PC-9 (cell line): ENCODE measurements at regions of chr14 and their contacts with region 1.

Region 1: GRCh38 chr14:75648066-75648838 is 12.4 kb downstream of the ERG28 start:
- DNase-seq: peak; percentile 76 to 94
- H3K4me3 ChIP-seq: no peak overlapping the region
- H3K27ac ChIP-seq: peak overlapping the region; percentile 61
- H3K4me1 ChIP-seq: peaks cover 45% of the 10 kb centered on the region
- H3K27me3 ChIP-seq: no peaks in the 10 kb centered on the region
- CTCF ChIP-seq: no peak

Region 2: DNA sequence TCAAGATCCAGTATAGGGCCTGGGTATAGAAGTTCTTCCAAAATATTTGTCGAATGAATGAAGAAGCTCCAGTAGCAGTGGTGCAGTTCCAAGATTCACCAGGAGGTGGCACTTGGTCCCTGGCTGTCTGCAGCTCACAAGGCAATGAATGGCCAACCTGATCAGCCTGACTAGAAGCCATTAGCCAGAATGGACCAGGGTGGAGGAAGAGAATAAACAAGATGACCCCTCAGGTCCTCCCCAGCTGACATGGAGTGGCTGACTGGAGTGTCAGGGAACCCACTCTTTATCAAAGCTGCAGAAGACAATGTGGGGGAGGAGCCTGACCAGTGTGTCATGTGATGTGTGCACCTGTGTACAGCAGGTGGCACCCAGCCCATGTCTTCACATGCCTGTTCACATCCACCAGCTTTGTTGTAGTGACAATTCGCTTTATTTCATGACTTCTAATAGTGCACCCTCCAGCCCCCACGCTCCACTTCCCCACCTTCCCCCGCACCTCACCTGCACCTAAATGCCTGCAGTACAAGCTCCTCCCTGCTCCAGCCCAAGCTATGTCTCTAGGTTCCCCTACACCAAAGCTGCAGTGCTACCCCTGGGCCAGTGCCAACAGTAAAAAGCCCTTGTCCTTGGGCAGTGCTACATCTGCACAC is 1039.2 kb before region 1 on chr14:
- CTCF ChIA-PET with region 1: no interaction called
- POLR2A ChIA-PET with region 1: no interaction called
- intact Hi-C with region 1: no loop called
- DNase-seq: peak; percentile 79 to 95
- H3K4me3 ChIP-seq: no peak overlapping the region
- H3K27ac ChIP-seq: no peak overlapping the region
- H3K4me1 ChIP-seq: peaks cover 29% of the 10 kb centered on the region
- H3K27me3 ChIP-seq: no peaks in the 10 kb centered on the region
- CTCF ChIP-seq: peak; percentile 100

Region 3: GRCh38 chr14:75604856-75605851 is 43.1 kb before region 1 on chr14:
- CTCF ChIA-PET with region 1: no interaction called
- POLR2A ChIA-PET with region 1: interaction called, 4 read pairs
- intact Hi-C with region 1: loop called (anchors 5 kb)
- DNase-seq: peak in 1 of 2 experiments; percentile 32
- H3K4me3 ChIP-seq: no peak overlapping the region
- H3K27ac ChIP-seq: no peak overlapping the region
- H3K4me1 ChIP-seq: no peaks in the 10 kb centered on the region
- H3K27me3 ChIP-seq: no peaks in the 10 kb centered on the region
- CTCF ChIP-seq: no peak

Region 4: GRCh38 chr14:75636100-75636692 is 12.1 kb before region 1 on chr14:
- CTCF ChIA-PET with region 1: no interaction called
- POLR2A ChIA-PET with region 1: interaction called, 5 read pairs
- intact Hi-C with region 1: loop called (anchors 1 kb)
- DNase-seq: peak in 1 of 2 experiments; percentile 45
- H3K4me3 ChIP-seq: no peak overlapping the region
- H3K27ac ChIP-seq: peak overlapping the region; percentile 71
- H3K4me1 ChIP-seq: peaks cover 42% of the 10 kb centered on the region
- H3K27me3 ChIP-seq: no peaks in the 10 kb centered on the region
- CTCF ChIP-seq: no peak

Region 5: DNA sequence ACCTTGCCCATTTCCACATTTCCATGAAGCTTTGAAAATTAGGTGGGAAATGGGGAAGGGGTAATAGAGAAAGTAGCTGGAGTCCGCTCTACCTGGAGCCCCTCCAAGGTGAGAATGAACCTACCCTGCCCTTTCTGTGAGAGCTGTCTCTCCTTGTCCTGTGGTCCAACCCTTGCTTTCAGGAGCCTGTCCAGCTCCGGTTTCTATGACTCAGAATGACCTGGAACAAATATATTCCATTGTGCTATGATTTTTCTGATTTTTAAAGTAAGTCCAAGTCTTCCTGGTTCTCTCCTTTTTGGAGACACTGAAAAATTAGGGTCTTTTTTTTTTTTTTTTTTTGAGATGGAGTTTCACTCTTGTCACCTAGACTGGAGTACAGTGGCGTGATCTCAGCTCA is 1023.9 kb after region 1 on chr14:
- CTCF ChIA-PET with region 1: no interaction called
- POLR2A ChIA-PET with region 1: no interaction called
- intact Hi-C with region 1: no loop called
- DNase-seq: no peak
- H3K4me3 ChIP-seq: no peak overlapping the region
- H3K27ac ChIP-seq: no peak overlapping the region
- H3K4me1 ChIP-seq: no peaks in the 10 kb centered on the region
- H3K27me3 ChIP-seq: peaks cover 92% of the 10 kb centered on the region
- CTCF ChIP-seq: no peak